PC-3 (cell line): ENCODE measurements at regions of chr5 and their contacts with region 1.

Region 1: GRCh38 chr5:141430332-141431113 is at the start of gene PCDHGA12:
- DNase-seq: no peak
- ATAC-seq: no peak
- H3K4me3 ChIP-seq: no peak within 1 kb of the TSS
- H3K27ac ChIP-seq: no peak within 1 kb of the TSS
- H3K4me1 ChIP-seq: no peaks in the 10 kb centered on the region
- H3K27me3 ChIP-seq: no peaks in the 10 kb centered on the region
- CTCF ChIP-seq: no peak
- total RNA-seq, gene PCDHGA12: 0.11 and 0.52 TPM in 2 replicates

Region 2: DNA sequence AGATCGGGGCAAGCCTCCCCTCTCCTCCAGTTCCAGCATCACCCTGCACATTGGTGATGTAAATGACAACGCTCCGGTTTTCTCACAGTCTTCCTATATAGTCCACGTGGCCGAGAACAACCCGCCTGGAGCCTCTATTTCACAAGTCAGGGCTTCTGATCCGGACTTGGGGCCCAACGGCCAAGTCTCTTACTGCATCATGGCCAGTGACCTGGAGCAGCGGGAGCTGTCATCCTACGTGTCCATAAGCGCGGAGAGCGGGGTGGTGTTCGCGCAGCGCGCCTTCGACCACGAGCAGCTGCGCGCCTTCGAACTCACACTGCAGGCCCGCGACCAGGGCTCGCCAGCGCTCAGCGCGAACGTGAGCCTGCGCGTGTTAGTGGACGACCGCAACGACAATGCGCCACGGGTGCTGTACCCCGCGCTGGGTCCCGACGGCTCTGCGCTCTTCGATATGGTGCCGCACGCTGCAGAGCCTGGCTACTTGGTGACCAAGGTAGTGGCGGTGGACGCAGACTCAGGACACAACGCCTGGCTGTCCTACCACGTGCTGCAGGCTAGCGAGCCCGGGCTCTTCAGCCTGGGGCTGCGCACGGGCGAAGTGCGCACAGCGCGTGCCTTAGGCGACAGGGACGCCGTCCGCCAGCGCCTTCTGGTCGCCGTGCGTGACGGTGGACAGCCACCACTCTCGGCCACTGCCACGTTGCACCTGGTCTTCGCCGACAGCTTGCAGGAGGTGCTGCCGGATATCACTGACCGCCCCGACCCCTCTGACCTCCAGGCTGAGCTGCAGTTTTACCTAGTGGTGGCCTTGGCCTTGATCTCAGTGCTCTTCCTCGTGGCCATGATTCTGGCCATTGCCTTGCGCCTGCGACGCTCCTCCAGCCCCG is 41.1 kb before region 1 on chr5:
- CTCF ChIA-PET with region 1: no interaction called
- POLR2A ChIA-PET with region 1: interaction called, 10 read pairs
- intact Hi-C with region 1: no loop called
- DNase-seq: no peak
- ATAC-seq: no peak
- H3K4me3 ChIP-seq: no peak overlapping the region
- H3K27ac ChIP-seq: no peak overlapping the region
- H3K4me1 ChIP-seq: no peaks in the 10 kb centered on the region
- H3K27me3 ChIP-seq: no peaks in the 10 kb centered on the region
- CTCF ChIP-seq: no peak

Region 3: DNA sequence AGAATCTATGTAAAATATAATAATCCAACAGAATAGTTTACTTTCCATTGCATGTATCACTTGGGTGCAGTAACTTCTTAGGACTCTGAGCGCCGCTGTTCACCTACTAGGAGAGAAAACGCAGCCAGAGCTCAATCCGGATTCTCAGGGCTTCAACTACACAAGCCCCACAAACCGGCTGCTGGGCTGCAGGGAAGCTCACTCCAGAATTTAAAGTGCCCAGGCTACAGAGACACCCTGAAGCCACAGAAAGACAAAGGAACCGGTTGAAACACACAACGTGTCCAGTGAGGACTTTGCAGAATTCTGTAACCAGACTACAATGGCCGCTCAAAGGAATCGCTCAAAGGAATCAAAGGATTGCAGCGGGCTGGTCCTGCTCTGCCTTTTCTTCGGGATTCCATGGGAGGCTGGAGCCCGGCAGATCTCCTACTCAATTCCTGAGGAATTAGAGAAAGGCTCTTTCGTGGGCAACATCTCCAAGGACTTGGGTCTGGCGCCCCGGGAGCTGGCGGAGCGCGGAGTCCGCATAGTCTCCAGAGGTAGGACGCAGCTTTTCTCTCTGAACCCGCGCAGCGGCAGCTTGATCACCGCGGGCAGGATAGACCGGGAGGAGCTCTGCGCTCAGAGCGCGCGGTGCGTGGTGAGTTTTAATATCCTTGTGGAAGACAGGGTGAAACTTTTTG is 17.5 kb before region 1 on chr5 and contains the start of gene PCDHGA10:
- CTCF ChIA-PET with region 1: no interaction called
- POLR2A ChIA-PET with region 1: no interaction called
- intact Hi-C with region 1: no loop called
- DNase-seq: no peak
- ATAC-seq: no peak
- H3K4me3 ChIP-seq: no peak within 1 kb of the TSS
- H3K27ac ChIP-seq: no peak within 1 kb of the TSS
- H3K4me1 ChIP-seq: no peaks in the 10 kb centered on the region
- H3K27me3 ChIP-seq: no peaks in the 10 kb centered on the region
- CTCF ChIP-seq: no peak
- total RNA-seq, gene PCDHGA10: 0.23 and 0.84 TPM in 2 replicates